A549 (cell line): ENCODE measurements at regions of chr11 and their contacts with region 1.

Region 1: DNA sequence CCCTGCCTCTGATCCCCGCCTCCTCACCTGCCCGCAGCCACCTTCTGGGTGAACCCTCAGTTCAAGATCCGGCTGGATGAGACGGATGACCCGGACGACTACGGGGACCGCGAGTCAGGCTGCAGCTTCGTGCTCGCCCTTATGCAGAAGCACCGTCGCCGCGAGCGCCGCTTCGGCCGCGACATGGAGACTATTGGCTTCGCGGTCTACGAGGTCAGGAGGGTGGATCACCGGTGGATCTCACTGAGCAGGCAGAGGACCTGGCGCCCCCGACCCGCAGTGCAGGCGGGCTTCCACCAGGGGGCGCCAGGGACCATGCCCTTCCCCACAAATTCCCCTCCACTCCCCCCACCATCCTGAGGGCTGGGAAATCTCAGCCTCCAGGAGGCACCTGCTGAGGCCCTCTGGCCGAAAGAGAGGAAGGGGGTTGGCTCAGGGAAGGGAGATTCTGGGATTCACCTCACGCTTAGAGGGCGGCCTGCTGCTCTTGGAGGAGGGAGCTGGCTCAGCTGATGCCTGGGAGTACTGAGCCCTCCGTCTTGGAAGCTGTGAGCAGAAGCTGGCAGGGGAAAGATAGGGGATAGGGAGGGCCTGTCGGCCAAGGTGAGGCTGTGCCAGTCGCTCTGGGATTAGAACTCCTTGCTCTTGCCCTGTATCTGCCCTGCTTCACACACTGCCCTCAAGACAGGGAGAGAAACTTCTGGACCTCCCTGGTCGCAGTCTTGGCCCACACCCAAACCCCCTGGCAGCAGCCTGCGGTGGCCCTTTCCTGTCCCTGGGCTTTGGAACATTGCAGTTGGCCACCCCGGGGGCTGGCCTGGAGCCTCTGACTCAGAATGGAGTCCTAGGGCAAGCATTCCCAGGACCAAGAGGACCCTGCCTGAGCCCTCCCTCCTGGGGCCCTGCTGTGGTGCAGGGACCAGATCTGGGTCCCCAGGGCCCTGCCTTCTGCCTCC is 23.2 kb downstream of the CAPN1 start:
- DNase-seq: peak; percentile 48 to 81
- ATAC-seq: peak; percentile 69 to 88; a peak in 5 of 6 replicates
- H3K4me3 ChIP-seq: no peak overlapping the region
- H3K27ac ChIP-seq: no peak overlapping the region
- H3K4me1 ChIP-seq: no peaks in the 10 kb centered on the region
- CTCF ChIP-seq: peak; percentile 94
- EP300 ChIP-seq: no peak
- POLR2A ChIP-seq: no peak
- RAD21 ChIP-seq: peak; percentile 73 to 75

Region 2: GRCh38 chr11:65180877-65181568 is 23.9 kb before region 1 on chr11:
- CTCF ChIA-PET with region 1: interaction called, 22 read pairs
- POLR2A ChIA-PET with region 1: interaction called, 3 read pairs
- DNase-seq: peak; percentile 76 to 77
- ATAC-seq: peak; percentile 83 to 85
- H3K4me3 ChIP-seq: peak overlapping the region; percentile 97
- H3K27ac ChIP-seq: peak overlapping the region; percentile 99
- H3K4me1 ChIP-seq: peaks cover 17% of the 10 kb centered on the region; the same call in 2 of the 3 replicates
- CTCF ChIP-seq: peak; percentile 52
- EP300 ChIP-seq: no peak
- POLR2A ChIP-seq: no peak
- RAD21 ChIP-seq: peak; percentile 63 to 75

Region 3: GRCh38 chr11:65225279-65226102 is 20.6 kb after region 1 on chr11:
- CTCF ChIA-PET with region 1: interaction called, 81 read pairs
- POLR2A ChIA-PET with region 1: no interaction called
- DNase-seq: peak in 1 of 2 experiments; percentile 32
- ATAC-seq: peak; percentile 68 to 82
- H3K4me3 ChIP-seq: no peak overlapping the region
- H3K27ac ChIP-seq: peak overlapping the region in 1 of 2 experiments; percentile 45; a peak in 2 of 6 replicates
- H3K4me1 ChIP-seq: peaks cover 9% of the 10 kb centered on the region
- CTCF ChIP-seq: peak; percentile 23; the same call in 1 of the 3 replicates
- EP300 ChIP-seq: no peak
- POLR2A ChIP-seq: no peak
- RAD21 ChIP-seq: peak; percentile 31 to 42; a peak in 2 of 5 replicates

Region 4: DNA sequence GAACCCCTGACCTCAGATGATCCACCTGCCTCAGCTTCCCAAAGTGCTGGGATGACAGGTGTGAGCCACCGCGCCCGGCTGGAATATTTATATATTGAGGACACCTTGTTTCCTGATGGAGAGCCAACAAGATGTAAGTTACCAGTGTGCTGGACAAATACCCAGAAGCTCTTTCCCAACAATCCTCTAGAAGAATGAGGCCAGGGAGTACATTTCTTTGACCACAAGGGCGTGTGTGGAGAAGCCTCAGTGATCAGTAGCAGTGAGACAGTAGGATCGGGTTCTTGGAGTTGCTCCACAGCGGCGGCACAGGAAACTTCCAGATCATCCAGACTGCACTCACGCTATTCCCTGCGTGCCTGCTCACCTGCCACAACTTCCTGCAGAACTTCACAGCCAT is 46.6 kb after region 1 on chr11:
- CTCF ChIA-PET with region 1: interaction called, 24 read pairs
- POLR2A ChIA-PET with region 1: no interaction called
- DNase-seq: no peak
- ATAC-seq: 0 out of 6 replicates have a peak, but pooled peaks of 1 of the 2 experiments have one; percentile 5
- H3K4me3 ChIP-seq: no peak overlapping the region
- H3K27ac ChIP-seq: no peak overlapping the region
- H3K4me1 ChIP-seq: no peaks in the 10 kb centered on the region
- CTCF ChIP-seq: no peak
- EP300 ChIP-seq: no peak
- POLR2A ChIP-seq: no peak
- RAD21 ChIP-seq: no peak

Region 5: GRCh38 chr11:65261591-65262380 is 56.9 kb after region 1 on chr11 and contains the start of gene POLA2:
- CTCF ChIA-PET with region 1: interaction called, 22 read pairs
- POLR2A ChIA-PET with region 1: no interaction called
- DNase-seq: peak; percentile 95 to 96
- ATAC-seq: peak; percentile 79 to 94
- H3K4me3 ChIP-seq: peak within 1 kb of the TSS; percentile 77
- H3K27ac ChIP-seq: peak within 1 kb of the TSS; percentile 82 to 93
- H3K4me1 ChIP-seq: peaks cover 11% of the 10 kb centered on the region
- CTCF ChIP-seq: no peak
- EP300 ChIP-seq: no peak
- POLR2A ChIP-seq: peak; percentile 85
- RAD21 ChIP-seq: no peak
- polyA plus RNA-seq, gene POLA2: 52.3 and 55.6 TPM in 2 replicates

Region 6: DNA sequence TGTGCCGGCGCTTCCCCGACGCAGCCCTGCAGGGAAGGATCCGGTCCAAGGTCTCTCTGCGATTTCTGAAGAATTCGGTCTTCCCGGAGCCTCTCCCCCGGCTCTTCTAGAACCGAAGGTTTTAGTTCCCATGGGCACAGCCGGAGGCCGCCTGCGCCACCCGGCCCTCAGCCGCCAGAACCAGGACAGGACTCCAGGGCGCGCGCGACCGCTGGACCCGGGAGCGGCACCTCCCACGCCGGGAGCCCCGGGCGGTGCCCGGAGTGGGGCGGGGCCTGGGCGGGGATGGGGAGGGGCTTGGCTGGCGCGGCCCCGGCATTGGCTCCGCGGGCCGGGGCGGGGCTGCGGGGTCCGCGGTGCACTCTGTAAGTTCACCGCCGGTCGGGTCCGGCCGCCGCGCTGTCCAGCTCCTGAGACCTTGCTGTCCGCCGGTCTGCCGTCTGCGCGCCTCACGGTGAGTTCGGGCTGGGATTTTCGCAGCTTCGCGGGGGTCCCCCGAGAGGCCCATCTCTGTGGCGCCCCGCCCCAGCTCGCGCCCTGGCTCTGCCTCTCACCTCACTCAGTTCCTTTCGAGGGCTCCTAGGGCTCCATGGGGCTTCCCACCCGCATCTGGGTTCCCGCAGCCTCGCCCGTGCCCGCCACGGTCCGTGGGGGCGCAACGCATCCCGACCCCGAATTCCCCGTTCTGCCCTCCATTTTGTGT is 109.7 kb after region 1 on chr11 and contains the start of gene CDC42EP2:
- CTCF ChIA-PET with region 1: interaction called, 15 read pairs
- POLR2A ChIA-PET with region 1: no interaction called
- DNase-seq: peak; percentile 77 to 84
- ATAC-seq: peak; percentile 73 to 88
- H3K4me3 ChIP-seq: peak within 1 kb of the TSS; percentile 99
- H3K27ac ChIP-seq: peak within 1 kb of the TSS; percentile 91
- H3K4me1 ChIP-seq: peaks cover 55% of the 10 kb centered on the region
- CTCF ChIP-seq: no peak
- EP300 ChIP-seq: no peak
- POLR2A ChIP-seq: peak; percentile 70
- RAD21 ChIP-seq: no peak
- polyA plus RNA-seq, gene CDC42EP2: 3.0 and 3.7 TPM in 2 replicates

Region 7: DNA sequence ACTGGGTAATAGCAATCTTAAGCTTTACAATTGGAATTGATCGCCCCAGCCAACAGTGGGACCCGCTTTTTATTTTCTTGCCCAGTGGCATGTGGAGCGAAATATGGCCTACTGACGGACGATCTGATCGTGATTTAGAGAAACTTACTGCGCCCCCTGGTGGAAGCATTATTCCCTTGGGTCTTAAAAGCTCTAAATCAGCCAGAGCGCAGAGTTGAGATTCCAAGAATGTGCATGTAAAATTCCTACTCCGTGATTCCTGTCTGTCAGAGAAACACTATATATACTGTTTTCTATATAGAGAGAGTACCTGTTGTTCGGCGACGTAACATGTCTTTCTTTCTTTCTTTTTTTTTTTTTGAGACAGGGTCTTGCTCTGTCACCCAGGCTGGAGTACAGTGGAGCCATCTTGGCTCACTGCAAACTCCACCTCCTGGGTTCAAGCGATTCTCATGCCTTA is 125.0 kb after region 1 on chr11:
- CTCF ChIA-PET with region 1: interaction called, 22 read pairs
- POLR2A ChIA-PET with region 1: no interaction called
- DNase-seq: peak; percentile 76 to 93
- ATAC-seq: peak; percentile 68 to 81
- H3K4me3 ChIP-seq: no peak overlapping the region
- H3K27ac ChIP-seq: peak overlapping the region; percentile 23 to 53; a peak in 4 of 6 replicates
- H3K4me1 ChIP-seq: peaks cover 9% of the 10 kb centered on the region
- CTCF ChIP-seq: peak; percentile 85
- EP300 ChIP-seq: no peak
- POLR2A ChIP-seq: no peak
- RAD21 ChIP-seq: peak; percentile 68 to 69